Spleen (tissue), 13 donors: ENCODE measurements at regions of chr2 and their contacts with region 1.

Region 1: GRCh38 chr2:201059961-201060755 is 11.3 kb downstream of the HYCC2 start:
- DNase-seq: no peak
- H3K4me3 ChIP-seq: no peak overlapping the region
- H3K27ac ChIP-seq: peak overlapping the region in 4 of 8 donors; percentile 39 to 76 (median 60)
- H3K4me1 ChIP-seq: peaks cover 0 to 57% (median 27%) of the 10 kb centered on the region in 6 donors
- H3K27me3 ChIP-seq: no peaks in the 10 kb centered on the region
- CTCF ChIP-seq: no peak
- POLR2A ChIP-seq: no peak

Region 2: GRCh38 chr2:200975672-200976071 is 84.5 kb before region 1 on chr2:
- intact Hi-C with region 1: loop called (anchors 10 kb)
- DNase-seq: no peak
- H3K4me3 ChIP-seq: no peak overlapping the region
- H3K27ac ChIP-seq: no peak overlapping the region
- H3K4me1 ChIP-seq: no peaks in the 10 kb centered on the region
- H3K27me3 ChIP-seq: no peaks in the 10 kb centered on the region
- CTCF ChIP-seq: no peak
- POLR2A ChIP-seq: no peak

Region 3: DNA sequence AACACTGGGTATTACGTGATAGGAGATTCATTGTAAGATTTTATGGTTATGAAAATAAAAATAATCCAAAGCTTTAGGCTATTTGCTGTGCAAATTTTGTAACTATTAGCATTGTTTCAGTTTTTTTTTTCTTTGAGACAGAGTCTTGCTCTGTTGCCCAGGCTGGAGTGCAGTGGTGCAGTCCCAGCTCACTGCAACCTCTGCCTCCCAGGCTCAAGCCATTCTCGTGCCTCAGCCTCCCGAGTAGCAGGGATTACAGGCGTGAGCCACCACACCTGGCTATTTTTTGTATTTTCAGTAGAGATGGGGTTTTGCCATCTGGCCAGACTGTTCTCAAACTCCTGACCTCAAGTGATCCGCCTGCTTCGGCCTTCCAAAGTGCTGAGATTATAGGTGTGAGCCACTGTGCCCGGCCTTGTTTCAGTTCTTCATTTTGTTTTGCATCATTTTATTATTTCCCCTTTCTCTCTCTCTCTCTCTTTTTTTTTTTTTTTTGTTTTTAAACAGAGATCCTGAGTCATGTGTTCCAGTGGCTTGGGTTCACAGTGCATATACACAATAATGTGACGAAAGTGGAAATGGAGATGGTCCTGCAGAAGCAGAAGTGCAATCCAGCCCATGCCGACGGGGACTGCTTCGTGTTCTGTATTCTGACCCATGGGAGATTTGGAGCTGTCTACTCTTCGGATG is 148.6 kb after region 1 on chr2:
- intact Hi-C with region 1: no loop called
- DNase-seq: peak; percentile 87
- H3K4me3 ChIP-seq: peak overlapping the region in 1 of 8 donors; percentile 46
- H3K27ac ChIP-seq: peak overlapping the region in 6 of 8 donors; percentile 5 to 89 (median 74)
- H3K4me1 ChIP-seq: peaks cover 0 to 44% (median 23%) of the 10 kb centered on the region in 6 donors
- H3K27me3 ChIP-seq: no peaks in the 10 kb centered on the region
- CTCF ChIP-seq: no peak
- POLR2A ChIP-seq: no peak

Region 4: GRCh38 chr2:201780674-201781581 is 720.8 kb after region 1 on chr2 and contains the start of gene ALS2:
- intact Hi-C with region 1: no loop called
- DNase-seq: peak; percentile 99
- H3K4me3 ChIP-seq: peak within 1 kb of the TSS; percentile 67 to 97 (median 89)
- H3K27ac ChIP-seq: peak within 1 kb of the TSS; percentile 63 to 94 (median 88)
- H3K4me1 ChIP-seq: peaks cover 7 to 44% (median 24%) of the 10 kb centered on the region in 6 donors
- H3K27me3 ChIP-seq: peaks cover 0 to 14% (median 0%) of the 10 kb centered on the region in 7 donors
- CTCF ChIP-seq: peak in 2 of 11 experiments; percentile 16 to 23
- POLR2A ChIP-seq: peak in 1 of 3 donors; percentile 29
- total RNA-seq, gene ALS2: 13.2 to 32.7 (median 18.4) TPM